Activated B cell treated with CpG ODN at 0.5 μM for 24 hours (primary cell): ENCODE measurements at regions of chr16 and their contacts with region 1.

Region 1: GRCh38 chr16:10876799-10877341 is at the start of gene CIITA:
- DNase-seq: peak; percentile 62
- ATAC-seq: peak; percentile 71
- H3K4me3 Mint-ChIP-seq: peak within 1 kb of the TSS; percentile 100
- H3K27ac Mint-ChIP-seq: peak within 1 kb of the TSS; percentile 90
- H3K4me1 Mint-ChIP-seq: peaks cover 70% of the 10 kb centered on the region
- H3K27me3 Mint-ChIP-seq: no peaks in the 10 kb centered on the region
- CTCF ChIP-seq: no peak
- total RNA-seq, gene CIITA: 332 and 401 TPM in 2 replicates

Region 2: DNA sequence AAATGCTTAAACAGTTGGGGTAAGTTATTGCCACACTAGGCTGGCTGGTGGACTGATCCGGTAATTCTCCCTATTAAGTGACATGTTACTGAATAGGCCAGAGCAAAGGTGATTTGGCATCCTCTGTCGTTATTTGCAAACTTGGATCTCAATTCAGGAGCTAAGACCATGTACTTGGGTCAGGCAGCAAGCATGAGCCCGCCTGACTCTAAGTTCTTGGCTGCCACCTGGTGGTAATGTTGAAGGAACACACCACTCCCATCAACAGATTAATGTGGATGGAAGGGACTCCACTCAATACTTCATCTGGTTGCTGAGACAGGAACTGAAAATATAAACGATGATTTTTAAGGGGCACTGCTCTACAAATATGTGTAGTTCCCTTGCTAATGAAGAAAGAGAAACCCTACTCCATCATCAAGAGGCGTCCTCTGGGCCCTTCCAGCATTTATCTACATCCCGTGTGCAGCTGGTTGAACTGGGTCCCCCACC is 367.3 kb before region 1 on chr16:
- CTCF ChIA-PET with region 1: interaction called, 10 read pairs
- POLR2A ChIA-PET with region 1: no interaction called
- intact Hi-C with region 1: no loop called
- DNase-seq: no peak
- ATAC-seq: peak; percentile 96
- H3K4me3 Mint-ChIP-seq: no peak overlapping the region
- H3K27ac Mint-ChIP-seq: peak overlapping the region; percentile 19
- H3K4me1 Mint-ChIP-seq: peaks cover 17% of the 10 kb centered on the region
- H3K27me3 Mint-ChIP-seq: no peaks in the 10 kb centered on the region
- CTCF ChIP-seq: peak; percentile 58

Region 3: GRCh38 chr16:10765772-10766171 is 111.1 kb before region 1 on chr16:
- CTCF ChIA-PET with region 1: no interaction called
- POLR2A ChIA-PET with region 1: interaction called, 25 read pairs
- intact Hi-C with region 1: loop called (anchors 1 kb)
- DNase-seq: peak; percentile 57
- ATAC-seq: peak; percentile 97
- H3K4me3 Mint-ChIP-seq: peak overlapping the region; percentile 56
- H3K27ac Mint-ChIP-seq: peak overlapping the region; percentile 84
- H3K4me1 Mint-ChIP-seq: peaks cover 44% of the 10 kb centered on the region
- H3K27me3 Mint-ChIP-seq: no peaks in the 10 kb centered on the region
- CTCF ChIP-seq: no peak

Region 4: DNA sequence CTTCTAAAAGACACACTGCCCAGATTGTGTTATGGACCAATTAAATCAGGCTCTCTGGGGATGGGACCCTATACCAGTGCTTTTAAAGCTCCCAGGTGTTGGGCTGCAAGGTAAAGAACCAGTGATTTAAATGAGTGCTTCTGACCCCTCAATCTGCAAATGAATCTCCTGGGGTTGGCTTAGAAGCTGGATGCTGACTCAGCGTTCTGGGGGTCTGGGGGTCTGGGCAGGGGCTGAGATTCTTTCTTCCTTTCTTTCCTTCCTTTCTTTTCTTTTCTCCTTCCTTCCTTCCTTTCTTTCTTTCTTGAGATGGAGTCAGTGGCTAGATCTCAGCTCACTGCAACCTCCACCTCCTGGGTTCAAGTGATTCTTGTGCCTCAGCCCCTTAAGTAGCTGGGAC is 56.3 kb before region 1 on chr16:
- CTCF ChIA-PET with region 1: interaction called, 3 read pairs
- POLR2A ChIA-PET with region 1: interaction called, 23 read pairs
- intact Hi-C with region 1: no loop called
- DNase-seq: no peak
- ATAC-seq: no peak
- H3K4me3 Mint-ChIP-seq: peak overlapping the region; percentile 24
- H3K27ac Mint-ChIP-seq: peak overlapping the region; percentile 78
- H3K4me1 Mint-ChIP-seq: peaks cover 23% of the 10 kb centered on the region
- H3K27me3 Mint-ChIP-seq: no peaks in the 10 kb centered on the region
- CTCF ChIP-seq: no peak

Region 5: DNA sequence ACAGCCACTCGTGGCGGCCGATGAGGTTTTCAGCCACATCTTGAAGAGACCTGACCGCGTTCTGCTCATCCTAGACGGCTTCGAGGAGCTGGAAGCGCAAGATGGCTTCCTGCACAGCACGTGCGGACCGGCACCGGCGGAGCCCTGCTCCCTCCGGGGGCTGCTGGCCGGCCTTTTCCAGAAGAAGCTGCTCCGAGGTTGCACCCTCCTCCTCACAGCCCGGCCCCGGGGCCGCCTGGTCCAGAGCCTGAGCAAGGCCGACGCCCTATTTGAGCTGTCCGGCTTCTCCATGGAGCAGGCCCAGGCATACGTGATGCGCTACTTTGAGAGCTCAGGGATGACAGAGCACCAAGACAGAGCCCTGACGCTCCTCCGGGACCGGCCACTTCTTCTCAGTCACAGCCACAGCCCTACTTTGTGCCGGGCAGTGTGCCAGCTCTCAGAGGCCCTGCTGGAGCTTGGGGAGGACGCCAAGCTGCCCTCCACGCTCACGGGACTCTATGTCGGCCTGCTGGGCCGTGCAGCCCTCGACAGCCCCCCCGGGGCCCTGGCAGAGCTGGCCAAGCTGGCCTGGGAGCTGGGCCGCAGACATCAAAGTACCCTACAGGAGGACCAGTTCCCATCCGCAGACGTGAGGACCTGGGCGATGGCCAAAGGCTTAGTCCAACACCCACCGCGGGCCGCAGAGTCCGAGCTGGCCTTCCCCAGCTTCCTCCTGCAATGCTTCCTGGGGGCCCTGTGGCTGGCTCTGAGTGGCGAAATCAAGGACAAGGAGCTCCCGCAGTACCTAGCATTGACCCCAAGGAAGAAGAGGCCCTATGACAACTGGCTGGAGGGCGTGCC is 30.3 kb after region 1 on chr16:
- CTCF ChIA-PET with region 1: interaction called, 8 read pairs
- POLR2A ChIA-PET with region 1: interaction called, 234 read pairs
- intact Hi-C with region 1: loop called (anchors 1 kb)
- DNase-seq: no peak
- ATAC-seq: no peak
- H3K4me3 Mint-ChIP-seq: no peak overlapping the region
- H3K27ac Mint-ChIP-seq: peak overlapping the region; percentile 64
- H3K4me1 Mint-ChIP-seq: peaks cover 66% of the 10 kb centered on the region
- H3K27me3 Mint-ChIP-seq: no peaks in the 10 kb centered on the region
- CTCF ChIP-seq: no peak

Region 6: DNA sequence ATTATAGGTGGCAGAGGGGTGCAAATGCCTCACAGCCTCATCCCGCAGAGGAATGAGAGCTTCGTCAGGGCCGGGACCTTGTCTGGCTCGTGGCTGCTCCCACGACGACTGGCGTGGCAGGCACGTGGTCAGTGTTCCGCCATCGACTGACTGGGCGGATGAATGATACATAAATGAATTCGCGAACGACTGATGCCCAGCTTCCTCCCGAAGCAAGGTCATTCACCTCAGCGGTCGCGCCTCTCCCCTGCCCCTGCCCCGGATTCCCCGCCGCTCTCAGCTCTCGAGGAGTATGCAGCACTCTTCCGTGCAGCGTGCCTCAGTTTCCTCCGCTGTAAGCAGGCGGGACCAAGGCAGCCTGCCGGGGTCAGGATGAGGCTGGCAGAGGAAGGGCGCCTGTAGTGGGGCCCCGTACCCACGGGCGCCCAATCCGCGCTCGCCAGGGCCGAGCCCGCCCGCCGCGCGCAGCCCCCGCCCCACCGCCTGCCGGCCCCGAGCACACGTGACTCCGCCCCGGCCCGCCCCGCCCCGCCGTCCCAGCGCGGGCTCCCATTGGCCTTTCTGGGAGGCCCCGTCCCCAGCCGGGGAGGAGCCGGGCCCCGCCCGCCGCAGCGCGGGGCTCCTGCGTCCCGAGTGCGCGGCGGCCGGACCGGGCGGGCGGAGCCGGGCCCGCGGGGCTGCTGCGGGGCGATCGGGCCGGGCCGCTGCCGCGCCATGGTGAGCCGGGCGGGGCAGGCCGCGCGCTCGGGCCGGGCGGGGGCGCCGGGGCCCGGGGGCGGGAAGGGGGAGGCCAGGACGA is 791.2 kb after region 1 on chr16 and contains the start of gene SNN:
- CTCF ChIA-PET with region 1: no interaction called
- POLR2A ChIA-PET with region 1: no interaction called
- intact Hi-C with region 1: loop called (anchors 10 kb)
- DNase-seq: peak; percentile 86
- ATAC-seq: peak; percentile 79
- H3K4me3 Mint-ChIP-seq: peak within 1 kb of the TSS; percentile 90
- H3K27ac Mint-ChIP-seq: peak within 1 kb of the TSS; percentile 89
- H3K4me1 Mint-ChIP-seq: peaks cover 72% of the 10 kb centered on the region
- H3K27me3 Mint-ChIP-seq: no peaks in the 10 kb centered on the region
- CTCF ChIP-seq: no peak
- total RNA-seq, gene SNN: 31.9 and 32.1 TPM in 2 replicates